T-cell (primary cell): ENCODE measurements at regions of chr12 and their contacts with region 1.

Region 1: GRCh38 chr12:56189176-56189917 is at the start of gene SMARCC2:
- DNase-seq: peak; percentile 63 to 94 (median 76)
- ATAC-seq: peak; percentile 85 to 91 (median 87)
- H3K4me3 ChIP-seq: peak within 1 kb of the TSS; percentile 71 to 88
- H3K4me3 Mint-ChIP-seq: peak within 1 kb of the TSS; percentile 93 to 98 (median 96)
- H3K27ac ChIP-seq: peak within 1 kb of the TSS; percentile 86
- H3K27ac Mint-ChIP-seq: peak within 1 kb of the TSS; percentile 95 to 97
- H3K4me1 ChIP-seq: peaks cover 12 to 31% of the 10 kb centered on the region in 2 experiments
- H3K4me1 Mint-ChIP-seq: peaks cover 41 to 52% (median 46%) of the 10 kb centered on the region in 3 donors
- H3K27me3 ChIP-seq: no peaks in the 10 kb centered on the region
- H3K27me3 Mint-ChIP-seq: no peaks in the 10 kb centered on the region
- total RNA-seq, gene SMARCC2: 135 to 160 (median 159) TPM

Region 2: GRCh38 chr12:56117778-56118687 is 71.3 kb before region 1 on chr12 and contains the start of gene ZC3H10:
- CTCF ChIA-PET with region 1: interaction called, 7 to 53 read pairs
- POLR2A ChIA-PET with region 1: interaction called in 1 of 2 experiments, 4 read pairs
- DNase-seq: peak; percentile 87 to 99 (median 96)
- ATAC-seq: peak; percentile 76 to 79 (median 76)
- H3K4me3 ChIP-seq: peak within 1 kb of the TSS; percentile 79 to 94
- H3K4me3 Mint-ChIP-seq: peak within 1 kb of the TSS; percentile 94 to 99 (median 94)
- H3K27ac ChIP-seq: peak within 1 kb of the TSS; percentile 92
- H3K27ac Mint-ChIP-seq: peak within 1 kb of the TSS; percentile 97 to 98
- H3K4me1 ChIP-seq: peaks cover 11 to 29% of the 10 kb centered on the region in 2 experiments
- H3K4me1 Mint-ChIP-seq: peaks cover 34 to 39% (median 37%) of the 10 kb centered on the region in 3 donors
- H3K27me3 ChIP-seq: no peaks in the 10 kb centered on the region
- H3K27me3 Mint-ChIP-seq: no peaks in the 10 kb centered on the region
- total RNA-seq, gene ZC3H10: 8.4 to 15.1 (median 11.4) TPM

Region 3: DNA sequence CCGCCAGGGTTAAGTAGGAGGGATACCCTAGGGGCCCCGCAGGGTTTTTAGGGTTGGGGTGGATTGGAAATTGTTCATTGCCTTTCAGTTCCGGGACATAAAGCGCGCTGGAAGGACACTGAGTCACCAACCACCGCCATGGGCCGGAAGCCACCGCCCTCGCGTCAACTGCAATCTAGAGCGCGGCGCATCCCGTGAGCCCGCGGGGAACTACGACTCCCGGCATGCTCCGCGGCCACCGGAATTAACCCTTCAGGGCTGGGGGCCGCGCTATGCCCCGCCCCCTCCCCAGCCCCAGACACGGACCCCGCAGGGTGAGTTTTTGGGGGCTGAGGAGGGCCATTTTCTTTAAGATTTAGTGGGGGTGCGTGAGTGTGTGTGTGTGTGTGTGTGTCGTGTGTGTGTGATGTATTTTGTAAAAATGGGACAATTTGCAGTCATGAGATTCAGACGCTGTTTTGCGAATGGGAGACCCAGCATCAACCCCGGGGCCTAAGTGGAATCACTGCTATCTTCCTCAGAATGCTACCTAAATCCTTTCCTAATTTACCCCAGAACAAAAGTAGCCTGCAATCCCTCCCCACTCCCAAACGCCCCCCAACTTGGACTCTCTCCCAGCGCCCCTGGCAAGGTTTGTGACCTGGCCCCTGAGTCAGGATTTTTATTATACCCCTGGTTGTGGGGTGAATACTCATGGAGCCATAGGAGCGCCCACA is 36.9 kb before region 1 on chr12 and contains the start of gene MYL6B:
- CTCF ChIA-PET with region 1: interaction called, 4 to 10 read pairs
- POLR2A ChIA-PET with region 1: interaction called in 1 of 2 experiments, 12 read pairs
- DNase-seq: peak; percentile 80 to 95 (median 89)
- ATAC-seq: peak; percentile 93 to 94 (median 93)
- H3K4me3 ChIP-seq: peak within 1 kb of the TSS; percentile 58 to 80
- H3K4me3 Mint-ChIP-seq: peak within 1 kb of the TSS; percentile 85 to 93 (median 93)
- H3K27ac ChIP-seq: peak within 1 kb of the TSS; percentile 87
- H3K27ac Mint-ChIP-seq: peak within 1 kb of the TSS; percentile 96 to 99
- H3K4me1 ChIP-seq: peaks cover 11 to 28% of the 10 kb centered on the region in 2 experiments
- H3K4me1 Mint-ChIP-seq: peaks cover 30 to 45% (median 44%) of the 10 kb centered on the region in 3 donors
- H3K27me3 ChIP-seq: no peaks in the 10 kb centered on the region
- H3K27me3 Mint-ChIP-seq: no peaks in the 10 kb centered on the region
- total RNA-seq, gene MYL6B: 5.9 to 12.4 (median 7.7) TPM

Region 4: GRCh38 chr12:56158029-56158925 is 31.1 kb before region 1 on chr12 and contains the start of gene MYL6:
- CTCF ChIA-PET with region 1: interaction called in 1 of 2 experiments, 10 read pairs
- POLR2A ChIA-PET with region 1: interaction called, 3 read pairs
- DNase-seq: peak; percentile 65 to 97 (median 90)
- ATAC-seq: peak; percentile 85 to 88 (median 86)
- H3K4me3 ChIP-seq: peak within 1 kb of the TSS; percentile 91 to 99
- H3K4me3 Mint-ChIP-seq: peak within 1 kb of the TSS; percentile 89 to 99 (median 97)
- H3K27ac ChIP-seq: peak within 1 kb of the TSS; percentile 93
- H3K27ac Mint-ChIP-seq: peak within 1 kb of the TSS; percentile 94 to 98
- H3K4me1 ChIP-seq: peaks cover 18 to 51% of the 10 kb centered on the region in 2 experiments
- H3K4me1 Mint-ChIP-seq: peaks cover 42 to 56% (median 56%) of the 10 kb centered on the region in 3 donors
- H3K27me3 ChIP-seq: no peaks in the 10 kb centered on the region
- H3K27me3 Mint-ChIP-seq: no peaks in the 10 kb centered on the region
- total RNA-seq, gene MYL6: 506 to 663 (median 569) TPM

Region 5: DNA sequence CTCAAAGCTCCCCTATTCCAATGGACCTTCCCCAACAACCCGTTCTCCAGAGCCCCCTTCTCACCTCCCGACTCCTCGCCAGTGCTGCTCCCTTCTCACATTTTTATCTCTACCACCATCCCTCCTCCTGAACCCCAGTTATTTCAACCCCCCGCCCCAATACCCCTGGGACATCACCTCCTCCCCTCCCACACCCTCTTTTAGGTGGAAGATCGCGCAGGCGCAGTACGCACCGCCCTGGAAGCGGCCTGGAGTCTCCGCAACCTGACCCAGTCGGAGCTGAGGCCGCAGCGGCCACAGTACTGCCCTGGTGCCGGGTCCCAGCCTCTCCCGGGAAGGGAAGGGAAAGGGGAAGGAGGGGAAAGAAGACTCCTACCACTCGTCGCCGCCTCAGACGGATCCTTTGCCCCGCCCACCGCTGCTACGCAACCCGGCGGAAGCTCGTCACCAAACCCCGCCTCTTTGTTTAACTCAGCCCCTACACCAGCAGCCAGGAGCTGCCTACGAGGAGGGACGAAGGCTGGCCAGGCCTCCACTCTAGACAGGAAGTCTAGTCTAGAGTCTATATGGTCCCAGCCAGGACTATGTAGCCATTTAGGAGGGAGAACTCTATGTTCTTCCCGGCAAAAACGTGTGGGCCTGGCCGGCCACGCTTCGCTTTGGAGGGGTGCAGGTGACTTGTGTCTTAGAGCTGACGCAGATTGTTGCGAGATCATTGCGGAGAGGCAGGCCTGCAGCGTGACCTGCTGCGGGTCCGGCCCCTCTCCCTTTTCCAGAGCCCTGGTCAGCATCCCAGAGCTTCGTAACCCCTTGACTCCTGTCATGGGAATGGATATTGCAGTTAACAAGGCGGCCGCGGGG is 32.4 kb after region 1 on chr12 and contains the start of gene RNF41:
- CTCF ChIA-PET with region 1: interaction called, 3 to 36 read pairs
- POLR2A ChIA-PET with region 1: interaction called in 1 of 2 experiments, 5 read pairs
- DNase-seq: peak; percentile 80 to 96 (median 89)
- ATAC-seq: peak; percentile 81 to 85 (median 82)
- H3K4me3 ChIP-seq: peak within 1 kb of the TSS; percentile 98
- H3K4me3 Mint-ChIP-seq: peak within 1 kb of the TSS; percentile 98 to 100 (median 98)
- H3K27ac ChIP-seq: peak within 1 kb of the TSS; percentile 94
- H3K27ac Mint-ChIP-seq: peak within 1 kb of the TSS; percentile 98 to 99
- H3K4me1 ChIP-seq: peaks cover 18 to 54% of the 10 kb centered on the region in 2 experiments
- H3K4me1 Mint-ChIP-seq: peaks cover 47 to 52% (median 49%) of the 10 kb centered on the region in 3 donors
- H3K27me3 ChIP-seq: no peaks in the 10 kb centered on the region
- H3K27me3 Mint-ChIP-seq: no peaks in the 10 kb centered on the region
- total RNA-seq, gene RNF41: 26.3 to 43.1 (median 39.4) TPM

Region 6: DNA sequence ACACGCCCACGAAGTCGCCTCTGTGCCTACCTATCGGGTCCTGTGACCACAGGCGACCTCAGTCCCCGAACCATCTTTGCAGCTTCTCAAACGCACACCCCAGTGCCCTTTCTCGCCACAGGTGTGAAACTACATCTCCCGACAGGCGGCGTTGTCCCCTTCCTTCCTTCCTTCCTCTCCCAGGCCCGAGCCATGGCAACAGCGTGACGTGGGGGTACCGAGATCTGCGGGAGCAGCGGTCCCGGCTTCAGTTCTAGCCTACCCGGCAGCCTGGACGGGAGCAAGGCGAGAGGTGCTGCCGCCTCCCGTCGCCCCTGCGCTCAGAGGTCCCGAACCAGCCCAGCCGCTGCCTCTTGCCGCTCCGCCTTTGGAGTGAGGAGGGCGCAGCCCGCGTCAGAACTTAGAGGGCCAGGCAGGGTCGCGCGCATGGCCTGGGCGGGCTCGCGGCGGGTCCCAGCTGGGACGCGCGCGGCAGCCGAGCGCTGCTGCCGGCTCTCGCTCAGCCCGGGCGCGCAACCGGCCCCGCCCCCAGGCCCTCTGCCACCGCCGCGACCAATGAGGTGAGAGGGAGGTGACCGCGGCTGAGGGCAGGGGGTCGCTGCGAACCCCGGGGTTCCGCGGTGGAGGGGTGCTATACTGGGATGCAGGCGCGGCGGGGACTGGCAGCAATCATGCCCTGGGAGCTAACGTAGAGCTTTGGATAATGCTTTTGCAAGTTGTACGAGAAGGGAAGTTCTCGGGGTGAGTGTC is 77.5 kb after region 1 on chr12 and contains the start of gene COQ10A:
- CTCF ChIA-PET with region 1: interaction called in 1 of 2 experiments, 13 read pairs
- POLR2A ChIA-PET with region 1: no interaction called
- DNase-seq: peak; percentile 79 to 94 (median 88)
- ATAC-seq: peak; percentile 87 to 92 (median 90)
- H3K4me3 ChIP-seq: peak within 1 kb of the TSS; percentile 63 to 91
- H3K4me3 Mint-ChIP-seq: peak within 1 kb of the TSS; percentile 83 to 89 (median 89)
- H3K27ac ChIP-seq: peak within 1 kb of the TSS; percentile 94
- H3K27ac Mint-ChIP-seq: peak within 1 kb of the TSS; percentile 97
- H3K4me1 ChIP-seq: peaks cover 5 to 19% of the 10 kb centered on the region in 2 experiments
- H3K4me1 Mint-ChIP-seq: peaks cover 18 to 21% (median 21%) of the 10 kb centered on the region in 3 donors
- H3K27me3 ChIP-seq: no peaks in the 10 kb centered on the region
- H3K27me3 Mint-ChIP-seq: no peaks in the 10 kb centered on the region
- total RNA-seq, gene COQ10A: 29.9 to 38.4 (median 31.9) TPM

Region 7: GRCh38 chr12:56468216-56469006 is 279.1 kb after region 1 on chr12 and contains the start of gene SPRYD4:
- CTCF ChIA-PET with region 1: interaction called in 1 of 2 experiments, 10 read pairs
- POLR2A ChIA-PET with region 1: no interaction called
- DNase-seq: peak; percentile 86 to 97 (median 93)
- ATAC-seq: peak; percentile 94 to 98 (median 96)
- H3K4me3 ChIP-seq: peak within 1 kb of the TSS; percentile 68 to 84
- H3K4me3 Mint-ChIP-seq: peak within 1 kb of the TSS; percentile 94 to 97 (median 94)
- H3K27ac ChIP-seq: peak within 1 kb of the TSS; percentile 82
- H3K27ac Mint-ChIP-seq: peak within 1 kb of the TSS; percentile 89 to 98
- H3K4me1 ChIP-seq: peaks cover 5 to 23% of the 10 kb centered on the region in 2 experiments
- H3K4me1 Mint-ChIP-seq: peaks cover 29 to 33% (median 32%) of the 10 kb centered on the region in 3 donors
- H3K27me3 ChIP-seq: no peaks in the 10 kb centered on the region
- H3K27me3 Mint-ChIP-seq: no peaks in the 10 kb centered on the region
- total RNA-seq, gene SPRYD4: 4.7 to 7.3 (median 5.5) TPM

Region 8: GRCh38 chr12:57487597-57488401 is 1298.5 kb after region 1 on chr12 and contains the start of gene MARS1:
- CTCF ChIA-PET with region 1: no interaction called
- POLR2A ChIA-PET with region 1: no interaction called
- DNase-seq: peak; percentile 74 to 97 (median 91)
- ATAC-seq: peak; percentile 98 to 99 (median 98)
- H3K4me3 ChIP-seq: peak within 1 kb of the TSS; percentile 94 to 95
- H3K4me3 Mint-ChIP-seq: peak within 1 kb of the TSS; percentile 90 to 98 (median 96)
- H3K27ac ChIP-seq: peak within 1 kb of the TSS; percentile 66
- H3K27ac Mint-ChIP-seq: peak within 1 kb of the TSS; percentile 94 to 95
- H3K4me1 ChIP-seq: peaks cover 12 to 23% of the 10 kb centered on the region in 2 experiments
- H3K4me1 Mint-ChIP-seq: peaks cover 38 to 40% (median 38%) of the 10 kb centered on the region in 3 donors
- H3K27me3 ChIP-seq: no peaks in the 10 kb centered on the region
- H3K27me3 Mint-ChIP-seq: no peaks in the 10 kb centered on the region
- total RNA-seq, gene MARS1: 167 to 350 (median 320) TPM